Panc1 (cell line): ENCODE measurements at regions of chr19 and their contacts with region 1.

Region 1: GRCh38 chr19:45770192-45771101 is 1.4 kb upstream of the SIX5 start:
- DNase-seq: no peak
- ATAC-seq: peak; percentile 78
- H3K4me3 ChIP-seq: peak overlapping the region; percentile 45 to 53
- H3K27ac ChIP-seq: peak overlapping the region; percentile 83; the same call in 1 of the 2 replicates
- H3K4me1 ChIP-seq: peaks cover 30% of the 10 kb centered on the region
- H3K27me3 ChIP-seq: no peaks in the 10 kb centered on the region
- CTCF ChIP-seq: peak; percentile 78

Region 2: DNA sequence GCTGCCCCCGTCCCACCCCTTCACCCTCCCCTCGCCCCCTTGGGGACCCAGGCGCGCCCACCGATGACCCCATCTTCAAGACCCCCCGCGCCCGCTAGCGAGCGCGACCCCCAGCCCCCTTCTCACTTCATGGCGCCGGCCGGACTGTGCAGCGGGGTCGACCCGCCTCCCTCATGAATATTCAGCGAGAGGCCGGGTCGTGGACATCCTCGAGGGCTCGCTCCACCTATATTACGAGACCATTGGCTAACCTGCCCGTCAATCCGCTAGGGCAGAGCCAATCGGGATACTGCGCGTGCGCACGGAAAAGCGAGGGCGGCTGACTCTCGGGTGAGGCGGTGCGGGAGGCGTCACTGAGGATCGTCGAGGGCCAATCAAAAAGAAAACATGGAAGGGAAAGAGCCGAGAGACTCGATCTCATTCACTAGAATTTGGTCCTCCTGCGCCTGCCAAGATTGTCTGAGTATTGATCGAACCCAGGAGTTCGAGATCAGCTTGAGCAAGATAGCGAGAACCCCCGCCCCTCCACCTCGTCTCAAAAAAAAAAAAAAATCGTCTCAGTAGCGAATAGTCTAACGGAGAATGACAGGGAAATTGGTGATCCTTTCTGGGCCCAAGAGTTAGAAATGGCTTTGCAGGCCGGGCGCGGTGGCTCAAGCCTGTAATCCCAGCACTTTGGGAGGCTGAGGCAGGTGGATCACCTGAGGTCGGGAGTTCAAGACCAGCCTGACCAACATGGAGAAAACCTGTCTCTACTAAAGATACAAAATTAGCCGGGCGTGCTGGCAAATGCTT is 399.8 kb before region 1 on chr19 and contains the start of gene ERCC2:
- CTCF ChIA-PET with region 1: no interaction called
- POLR2A ChIA-PET with region 1: no interaction called
- in situ Hi-C with region 1: no loop called
- intact Hi-C with region 1: no loop called
- DNase-seq: peak; percentile 88
- ATAC-seq: peak; percentile 99
- H3K4me3 ChIP-seq: peak within 1 kb of the TSS; percentile 65 to 68
- H3K27ac ChIP-seq: peak within 1 kb of the TSS; percentile 85
- H3K4me1 ChIP-seq: peaks cover 4% of the 10 kb centered on the region; the same call in 1 of the 2 replicates
- H3K27me3 ChIP-seq: no peaks in the 10 kb centered on the region
- CTCF ChIP-seq: no peak
- total RNA-seq, gene ERCC2: 32.5 TPM

Region 3: DNA sequence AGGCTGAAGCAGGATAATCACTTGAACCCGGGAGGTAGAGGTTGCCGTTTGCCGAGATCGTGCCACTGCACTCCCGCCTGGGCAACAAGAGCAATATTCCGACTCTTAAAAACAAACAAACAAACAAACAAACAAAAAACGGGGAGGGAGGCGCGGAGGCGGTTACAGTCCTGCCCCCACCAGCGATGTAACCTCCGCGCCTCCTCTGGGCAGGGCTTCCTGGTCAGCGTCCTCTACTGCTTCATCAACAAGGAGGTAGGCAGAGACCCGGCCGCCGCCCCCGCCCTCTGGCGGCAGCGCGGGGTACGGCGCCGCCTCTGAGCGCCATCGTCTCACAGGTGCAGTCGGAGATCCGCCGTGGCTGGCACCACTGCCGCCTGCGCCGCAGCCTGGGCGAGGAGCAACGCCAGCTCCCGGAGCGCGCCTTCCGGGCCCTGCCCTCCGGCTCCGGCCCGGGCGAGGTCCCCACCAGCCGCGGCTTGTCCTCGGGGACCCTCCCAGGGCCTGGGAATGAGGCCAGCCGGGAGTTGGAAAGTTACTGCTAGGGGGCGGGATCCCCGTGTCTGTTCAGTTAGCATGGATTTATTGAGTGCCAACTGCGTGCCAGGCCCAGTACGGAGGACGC is 88.9 kb before region 1 on chr19:
- CTCF ChIA-PET with region 1: interaction called, 13 read pairs
- POLR2A ChIA-PET with region 1: interaction called, 6 read pairs
- in situ Hi-C with region 1: no loop called
- intact Hi-C with region 1: no loop called
- DNase-seq: no peak
- ATAC-seq: peak; percentile 86
- H3K4me3 ChIP-seq: peak overlapping the region; percentile 37 to 54
- H3K27ac ChIP-seq: peak overlapping the region; percentile 74
- H3K4me1 ChIP-seq: peaks cover 8% of the 10 kb centered on the region
- H3K27me3 ChIP-seq: no peaks in the 10 kb centered on the region
- CTCF ChIP-seq: peak; percentile 94

Region 4: GRCh38 chr19:45705115-45705514 is 65.3 kb before region 1 on chr19:
- CTCF ChIA-PET with region 1: no interaction called
- POLR2A ChIA-PET with region 1: interaction called, 7 read pairs
- in situ Hi-C with region 1: no loop called
- intact Hi-C with region 1: loop called (anchors 10 kb)
- DNase-seq: no peak
- ATAC-seq: peak; percentile 27; the same call in 1 of the 2 replicates
- H3K4me3 ChIP-seq: no peak overlapping the region
- H3K27ac ChIP-seq: no peak overlapping the region
- H3K4me1 ChIP-seq: no peaks in the 10 kb centered on the region
- H3K27me3 ChIP-seq: no peaks in the 10 kb centered on the region
- CTCF ChIP-seq: no peak

Region 5: DNA sequence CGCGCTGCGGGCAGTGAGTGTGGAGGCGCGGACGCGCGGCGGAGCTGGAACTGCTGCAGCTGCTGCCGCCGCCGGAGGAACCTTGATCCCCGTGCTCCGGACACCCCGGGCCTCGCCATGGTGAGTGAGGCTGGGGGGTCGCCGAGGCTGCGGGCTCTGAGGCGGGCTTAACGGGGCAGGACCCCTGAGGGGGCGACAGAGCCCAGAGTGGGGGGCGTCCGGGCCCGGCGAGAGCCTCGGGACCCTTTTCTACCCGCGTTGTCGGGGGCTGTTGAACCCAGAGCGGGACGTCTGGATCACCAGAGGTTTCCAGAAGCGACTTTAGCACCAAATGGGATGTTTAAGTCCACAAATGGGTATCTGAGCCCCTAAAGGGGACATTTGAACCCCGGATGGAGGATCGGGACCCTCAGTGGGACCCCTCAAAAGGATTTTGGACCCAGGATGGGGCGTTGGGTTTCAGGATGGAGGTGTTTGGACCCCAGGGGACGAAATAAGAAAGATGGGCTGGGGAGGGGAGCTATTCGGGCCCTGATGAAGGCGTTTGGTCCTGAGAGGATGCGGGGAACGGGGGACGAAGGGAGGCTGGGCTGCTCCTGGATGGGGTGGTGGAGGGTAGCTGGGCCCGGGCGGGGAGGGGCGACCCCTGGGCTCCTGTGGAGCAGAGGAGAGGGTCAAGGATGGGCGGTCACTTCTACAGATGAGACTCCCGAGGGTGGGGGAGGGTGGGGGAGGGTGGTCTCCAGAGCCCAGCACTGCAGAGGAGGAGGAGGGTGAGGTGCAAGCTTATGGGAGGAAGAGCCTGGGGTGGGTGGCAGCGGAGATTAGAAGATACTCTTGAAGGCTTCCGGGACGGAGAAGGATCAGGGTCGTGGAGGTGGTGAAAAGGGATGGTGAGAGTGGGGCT is 831.1 kb after region 1 on chr19 and contains the start of gene CALM3:
- CTCF ChIA-PET with region 1: no interaction called
- POLR2A ChIA-PET with region 1: interaction called, 14 read pairs
- in situ Hi-C with region 1: no loop called
- intact Hi-C with region 1: no loop called
- DNase-seq: no peak
- ATAC-seq: no peak
- H3K4me3 ChIP-seq: peak within 1 kb of the TSS; percentile 98 to 99
- H3K27ac ChIP-seq: peak within 1 kb of the TSS; percentile 96
- H3K4me1 ChIP-seq: peaks cover 14% of the 10 kb centered on the region
- H3K27me3 ChIP-seq: no peaks in the 10 kb centered on the region
- CTCF ChIP-seq: no peak
- total RNA-seq, gene CALM3: 212 TPM